Naive thymus-derived CD4-positive, alpha-beta T cell (primary cell): ENCODE measurements at regions of chr10 and their contacts with region 1.

Region 1: GRCh38 chr10:99620713-99621453 is 644 bp upstream of the SLC25A28 start:
- DNase-seq: peak in 7 of 9 donors; percentile 66 to 86 (median 73)
- ATAC-seq: peak; percentile 89
- H3K4me3 ChIP-seq: peak overlapping the region; percentile 85
- H3K4me3 Mint-ChIP-seq: peak overlapping the region; percentile 83 to 93 (median 88)
- H3K27ac ChIP-seq: peak overlapping the region; percentile 99
- H3K27ac Mint-ChIP-seq: peak overlapping the region; percentile 75 to 98 (median 94)
- H3K4me1 ChIP-seq: peaks cover 20 to 29% of the 10 kb centered on the region in 2 donors
- H3K4me1 Mint-ChIP-seq: peaks cover 27 to 53% (median 45%) of the 10 kb centered on the region in 7 donors
- H3K27me3 ChIP-seq: no peaks in the 10 kb centered on the region
- H3K27me3 Mint-ChIP-seq: no peaks in the 10 kb centered on the region

Region 2: GRCh38 chr10:98446661-98447221 is 1174.1 kb before region 1 on chr10 and contains the start of gene HPS1:
- CTCF ChIA-PET with region 1: no interaction called
- POLR2A ChIA-PET with region 1: no interaction called
- intact Hi-C with region 1: loop called in 1 of 2 experiments (anchors 1 kb)
- DNase-seq: peak; percentile 60 to 88 (median 79)
- ATAC-seq: peak; percentile 93
- H3K4me3 ChIP-seq: peak within 1 kb of the TSS; percentile 87
- H3K4me3 Mint-ChIP-seq: peak within 1 kb of the TSS; percentile 76 to 96 (median 92)
- H3K27ac ChIP-seq: peak within 1 kb of the TSS; percentile 88
- H3K27ac Mint-ChIP-seq: peak within 1 kb of the TSS; percentile 75 to 97 (median 89)
- H3K4me1 ChIP-seq: peaks cover 19 to 21% of the 10 kb centered on the region in 2 donors
- H3K4me1 Mint-ChIP-seq: peaks cover 18 to 56% (median 44%) of the 10 kb centered on the region in 7 donors
- H3K27me3 ChIP-seq: no peaks in the 10 kb centered on the region
- H3K27me3 Mint-ChIP-seq: peaks cover 0 to 20% (median 6%) of the 10 kb centered on the region in 5 donors
- total RNA-seq, gene HPS1: 68.5 to 107 (median 90.9) TPM

Region 3: DNA sequence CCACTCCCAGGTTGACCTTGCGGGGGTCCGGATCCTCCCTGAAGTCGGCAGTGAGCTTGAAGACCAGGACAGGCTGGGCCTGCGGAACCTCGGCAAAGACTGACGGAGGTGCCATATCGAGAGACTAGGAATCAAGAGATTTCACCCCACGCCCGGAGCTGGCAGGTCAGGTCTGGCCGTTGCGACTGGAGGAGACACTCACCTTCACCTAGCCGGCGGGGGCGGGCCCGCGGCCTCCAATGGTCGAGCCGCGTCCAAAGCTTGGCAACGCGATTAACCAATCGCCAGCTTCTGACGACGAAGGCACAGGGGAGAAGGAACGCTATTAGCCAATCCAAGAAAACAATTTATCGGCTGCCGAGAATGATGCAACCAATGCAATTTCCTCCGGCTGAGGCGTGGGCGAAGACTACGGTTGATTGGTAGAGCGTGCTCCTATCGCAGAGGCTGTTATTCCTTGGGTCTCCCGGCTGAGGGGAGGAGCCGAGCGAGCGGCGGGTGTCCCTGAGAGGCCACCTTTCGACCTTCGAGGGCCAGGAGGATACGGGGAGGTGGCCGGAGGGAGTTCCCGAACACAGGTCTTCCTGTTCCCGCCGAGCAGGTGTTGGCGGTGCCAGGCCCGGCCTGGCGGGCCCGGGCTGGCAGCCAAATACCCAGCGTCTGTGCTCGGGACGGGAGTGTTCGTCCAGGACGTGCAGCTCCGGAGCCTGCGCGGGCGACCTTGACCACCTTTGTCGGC is 190.3 kb before region 1 on chr10 and contains the start of gene GOT1:
- CTCF ChIA-PET with region 1: interaction called, 8 read pairs
- POLR2A ChIA-PET with region 1: interaction called, 10 read pairs
- intact Hi-C with region 1: loop called (anchors 1 kb)
- DNase-seq: peak; percentile 72 to 95 (median 94)
- ATAC-seq: peak; percentile 97
- H3K4me3 ChIP-seq: peak within 1 kb of the TSS; percentile 81
- H3K4me3 Mint-ChIP-seq: peak within 1 kb of the TSS; percentile 94 to 100 (median 98)
- H3K27ac ChIP-seq: peak within 1 kb of the TSS; percentile 90
- H3K27ac Mint-ChIP-seq: peak within 1 kb of the TSS; percentile 88 to 97 (median 94)
- H3K4me1 ChIP-seq: peaks cover 5 to 9% of the 10 kb centered on the region in 2 donors
- H3K4me1 Mint-ChIP-seq: peaks cover 19 to 53% (median 44%) of the 10 kb centered on the region in 7 donors
- H3K27me3 ChIP-seq: no peaks in the 10 kb centered on the region
- H3K27me3 Mint-ChIP-seq: no peaks in the 10 kb centered on the region
- total RNA-seq, gene GOT1: 8.0 to 22.2 (median 10.2) TPM

Region 4: DNA sequence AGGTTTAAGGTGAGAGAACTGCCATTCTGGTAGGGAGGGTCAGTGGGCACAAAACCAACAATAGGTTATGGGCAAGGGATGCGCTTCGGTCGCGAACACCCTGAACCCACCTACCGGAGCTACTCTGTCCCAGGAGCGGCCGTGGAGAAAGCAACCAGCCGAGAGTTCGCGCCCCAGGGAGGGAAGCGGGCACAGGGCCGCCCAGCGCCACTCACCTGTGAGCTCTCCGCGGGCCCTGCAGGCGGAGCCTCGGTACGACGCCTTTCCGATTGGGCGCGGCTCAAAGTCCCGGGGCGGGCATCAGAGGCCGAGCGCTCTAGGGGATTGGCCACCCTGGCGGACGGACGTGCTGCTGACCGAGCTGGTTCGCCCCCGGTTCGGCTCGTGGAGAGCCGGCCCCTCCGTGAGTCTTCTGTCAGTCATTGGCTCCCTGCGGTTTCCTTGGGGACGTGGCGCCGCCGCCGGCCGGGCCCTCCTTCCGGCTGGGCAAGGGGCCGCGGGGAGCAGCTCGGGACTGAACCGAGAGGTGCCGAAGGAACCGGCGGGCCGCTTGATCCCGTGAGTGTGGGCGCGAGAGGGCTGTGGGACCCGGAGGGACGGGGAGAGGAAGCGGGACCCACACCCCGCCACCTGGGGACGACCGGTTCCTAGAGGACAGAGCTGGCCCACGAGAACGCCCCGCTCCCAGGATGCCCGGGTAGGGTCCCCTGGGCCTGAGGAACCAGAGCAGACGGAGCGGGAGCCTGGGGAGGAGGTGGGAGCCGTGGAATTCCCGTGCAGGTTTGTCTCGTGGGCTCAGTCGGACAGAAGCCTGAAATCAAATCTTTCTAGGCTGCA is 38.4 kb after region 1 on chr10 and contains the start of gene ENTPD7:
- CTCF ChIA-PET with region 1: interaction called, 8 read pairs
- POLR2A ChIA-PET with region 1: interaction called, 14 read pairs
- intact Hi-C with region 1: loop called (anchors 1 kb)
- DNase-seq: peak; percentile 66 to 90 (median 77)
- ATAC-seq: peak; percentile 99
- H3K4me3 ChIP-seq: peak within 1 kb of the TSS; percentile 72
- H3K4me3 Mint-ChIP-seq: peak within 1 kb of the TSS; percentile 80 to 95 (median 92)
- H3K27ac ChIP-seq: peak within 1 kb of the TSS; percentile 69
- H3K27ac Mint-ChIP-seq: peak within 1 kb of the TSS; percentile 5 to 88 (median 73)
- H3K4me1 ChIP-seq: no peaks in the 10 kb centered on the region
- H3K4me1 Mint-ChIP-seq: peaks cover 17 to 32% (median 21%) of the 10 kb centered on the region in 7 donors
- H3K27me3 ChIP-seq: no peaks in the 10 kb centered on the region
- H3K27me3 Mint-ChIP-seq: peaks cover 0 to 25% (median 15%) of the 10 kb centered on the region in 5 donors
- total RNA-seq, gene ENTPD7: 2.5 to 6.6 (median 3.4) TPM

Region 5: DNA sequence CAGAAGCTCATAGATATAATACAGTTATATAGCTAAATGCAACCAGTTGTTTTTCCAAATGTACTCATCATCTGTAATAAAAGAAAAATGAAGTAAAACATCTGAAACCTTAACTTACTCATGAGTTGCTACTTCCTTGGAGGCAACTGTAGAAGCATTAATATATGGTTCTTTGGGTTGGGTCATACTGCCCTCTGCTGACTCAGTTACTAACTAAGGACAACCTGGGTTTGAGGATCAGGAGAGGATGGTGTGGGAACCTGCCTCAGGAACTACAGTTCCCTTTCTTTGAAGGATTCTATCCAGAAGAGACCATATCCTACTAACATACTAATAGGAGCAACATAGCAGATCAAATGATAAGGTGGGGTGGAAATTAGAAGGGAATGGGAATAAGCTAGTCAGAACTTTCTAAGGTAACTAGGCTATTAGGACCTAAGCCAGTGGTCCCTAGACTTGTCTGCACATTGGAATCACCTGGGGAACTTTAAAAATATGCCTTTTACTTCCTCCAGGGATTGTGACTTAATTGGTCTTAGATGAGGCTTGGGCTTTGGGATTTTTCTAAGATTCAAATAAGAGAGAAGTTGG is 90.3 kb after region 1 on chr10:
- CTCF ChIA-PET with region 1: no interaction called
- POLR2A ChIA-PET with region 1: no interaction called
- intact Hi-C with region 1: loop called in 1 of 2 experiments (anchors 5 kb)
- DNase-seq: peak in 6 of 9 donors; percentile 8 to 43 (median 34)
- ATAC-seq: peak; percentile 81
- H3K4me3 ChIP-seq: no peak overlapping the region
- H3K4me3 Mint-ChIP-seq: no peak overlapping the region
- H3K27ac ChIP-seq: no peak overlapping the region
- H3K27ac Mint-ChIP-seq: no peak overlapping the region
- H3K4me1 ChIP-seq: no peaks in the 10 kb centered on the region
- H3K4me1 Mint-ChIP-seq: no peaks in the 10 kb centered on the region
- H3K27me3 ChIP-seq: no peaks in the 10 kb centered on the region
- H3K27me3 Mint-ChIP-seq: no peaks in the 10 kb centered on the region

Region 6: GRCh38 chr10:99732033-99732912 is 111.4 kb after region 1 on chr10 and contains the starts of genes COX15 and CUTC:
- CTCF ChIA-PET with region 1: no interaction called
- POLR2A ChIA-PET with region 1: interaction called, 17 read pairs
- intact Hi-C with region 1: loop called (anchors 1 kb)
- DNase-seq: peak; percentile 89 to 95 (median 94)
- ATAC-seq: peak; percentile 95
- H3K4me3 ChIP-seq: peak within 1 kb of the TSS; percentile 94
- H3K4me3 Mint-ChIP-seq: peak within 1 kb of the TSS; percentile 95 to 100 (median 98)
- H3K27ac ChIP-seq: peak within 1 kb of the TSS; percentile 83
- H3K27ac Mint-ChIP-seq: peak within 1 kb of the TSS; percentile 98 to 100 (median 99)
- H3K4me1 ChIP-seq: peaks cover 11 to 19% of the 10 kb centered on the region in 2 donors
- H3K4me1 Mint-ChIP-seq: peaks cover 28 to 79% (median 52%) of the 10 kb centered on the region in 7 donors
- H3K27me3 ChIP-seq: no peaks in the 10 kb centered on the region
- H3K27me3 Mint-ChIP-seq: no peaks in the 10 kb centered on the region
- total RNA-seq, gene COX15: 17.6 to 43.5 (median 32.9) TPM
- total RNA-seq, gene CUTC: 19.3 to 37.1 (median 25.0) TPM